Right lobe of liver (tissue), 6 donors: ENCODE measurements at regions of chr1 and their contacts with region 1.

Region 1: GRCh38 chr1:155323798-155324610 is 3.3 kb downstream of the RUSC1 start:
- DNase-seq: peak; percentile 98 to 99 (median 98)
- ATAC-seq: peak; percentile 84 to 93 (median 88)
- H3K4me3 ChIP-seq: peak overlapping the region; percentile 73 to 93 (median 87)
- H3K27ac ChIP-seq: peak overlapping the region; percentile 79 to 94 (median 84)
- H3K4me1 ChIP-seq: peaks cover 0 to 14% (median 1%) of the 10 kb centered on the region in 4 donors
- H3K27me3 ChIP-seq: no peaks in the 10 kb centered on the region
- CTCF ChIP-seq: no peak
- POLR2A ChIP-seq: peak; percentile 66

Region 2: DNA sequence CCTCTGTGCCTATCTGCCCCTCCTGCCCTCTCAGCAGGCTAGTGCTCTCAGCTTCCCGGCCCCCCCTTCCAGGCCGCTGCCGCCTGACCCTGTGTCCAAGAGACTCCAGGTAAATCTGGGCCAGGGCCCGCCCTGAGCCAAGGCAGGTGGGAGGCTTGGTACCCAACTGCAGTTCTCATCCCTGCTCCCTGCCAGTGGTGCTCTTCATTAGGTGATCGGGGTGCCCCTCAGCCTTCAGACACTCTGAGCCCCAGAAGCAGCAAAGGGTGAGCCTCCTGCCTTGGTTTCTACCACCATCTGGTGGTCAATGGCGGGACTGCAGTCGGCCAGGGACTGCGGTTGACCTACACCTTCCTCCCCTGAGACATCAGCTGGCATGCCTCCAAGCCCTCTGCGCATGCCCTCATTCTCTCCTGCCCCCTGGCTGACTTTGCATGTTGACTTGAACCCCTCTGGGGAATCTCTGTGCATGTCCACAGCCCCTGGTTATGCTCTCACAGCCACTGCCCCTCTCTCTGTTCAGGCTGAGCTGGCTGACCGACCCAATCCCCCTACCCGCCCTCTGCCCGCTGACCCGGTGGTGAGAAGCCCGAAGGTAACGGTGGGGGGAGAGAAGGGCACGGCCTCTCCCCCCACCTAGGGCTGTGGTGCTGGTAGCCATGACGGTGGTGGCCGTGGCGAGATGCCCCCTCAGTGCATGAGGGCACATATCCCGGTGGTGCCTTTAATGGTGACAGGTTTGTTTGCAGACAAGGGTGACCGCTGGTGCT is 262.4 kb before region 1 on chr1:
- intact Hi-C with region 1: no loop called
- DNase-seq: peak; percentile 88 to 91 (median 89)
- ATAC-seq: peak; percentile 67 to 77 (median 72)
- H3K4me3 ChIP-seq: no peak overlapping the region
- H3K27ac ChIP-seq: no peak overlapping the region
- H3K4me1 ChIP-seq: peaks cover 0 to 27% (median 14%) of the 10 kb centered on the region in 4 donors
- H3K27me3 ChIP-seq: no peaks in the 10 kb centered on the region
- CTCF ChIP-seq: peak; percentile 98 to 99 (median 99)
- POLR2A ChIP-seq: no peak

Region 3: DNA sequence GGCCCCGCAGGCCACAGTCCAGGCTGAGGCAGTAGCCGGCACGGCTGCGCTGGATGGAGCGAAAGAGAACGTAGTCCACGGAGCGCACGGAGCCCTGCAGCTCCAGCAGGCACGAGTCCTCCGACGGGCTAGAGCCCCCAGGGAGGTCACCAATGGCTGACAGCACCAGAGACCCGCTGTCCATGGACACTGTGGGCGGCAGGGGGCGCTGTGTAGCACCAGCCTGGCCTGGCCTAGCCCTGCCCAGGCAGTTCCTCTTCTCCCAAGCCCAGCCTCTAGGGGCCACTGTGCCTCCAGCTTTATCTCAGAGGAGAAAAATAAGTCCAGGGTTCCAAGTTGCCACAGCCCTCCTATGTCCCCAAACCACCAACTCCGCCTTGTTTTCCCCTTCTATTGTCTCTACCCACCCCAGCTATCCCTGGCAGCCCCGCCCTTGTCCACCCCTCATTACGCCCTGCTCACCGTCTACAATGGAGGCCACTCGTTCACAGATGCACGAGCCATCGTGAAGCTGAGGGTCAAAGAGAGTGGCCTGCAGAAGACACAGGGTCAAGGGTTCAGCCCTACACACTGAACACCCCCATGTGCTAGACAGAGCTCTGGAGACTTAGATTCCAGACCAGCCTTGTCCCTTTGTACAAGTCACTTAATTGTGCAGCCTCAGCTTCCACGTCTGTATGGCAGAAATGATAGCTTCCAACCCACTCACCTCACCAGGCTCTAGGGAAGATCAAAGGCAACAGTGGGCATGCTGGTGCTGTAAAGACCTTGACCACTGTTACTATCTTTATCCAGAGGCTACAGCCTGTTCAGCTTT is 73.2 kb before region 1 on chr1:
- intact Hi-C with region 1: loop called in 1 of 2 experiments (anchors 5 kb)
- DNase-seq: peak; percentile 93 to 94 (median 94)
- ATAC-seq: peak; percentile 83 to 92 (median 87)
- H3K4me3 ChIP-seq: peak overlapping the region in 1 of 3 donors; percentile 23
- H3K27ac ChIP-seq: peak overlapping the region in 1 of 3 donors; percentile 47
- H3K4me1 ChIP-seq: peaks cover 0 to 16% (median 0%) of the 10 kb centered on the region in 4 donors
- H3K27me3 ChIP-seq: no peaks in the 10 kb centered on the region
- CTCF ChIP-seq: peak; percentile 99 to 100 (median 100)
- POLR2A ChIP-seq: no peak

Region 4: GRCh38 chr1:155277070-155277895 is 46.7 kb before region 1 on chr1 and contains the start of gene HCN3:
- intact Hi-C with region 1: loop called (anchors 5 kb)
- DNase-seq: peak; percentile 99
- ATAC-seq: peak; percentile 85 to 90 (median 89)
- H3K4me3 ChIP-seq: peak within 1 kb of the TSS; percentile 64 to 73 (median 68)
- H3K27ac ChIP-seq: no peak within 1 kb of the TSS
- H3K4me1 ChIP-seq: peaks cover 0 to 4% (median 2%) of the 10 kb centered on the region in 4 donors
- H3K27me3 ChIP-seq: no peaks in the 10 kb centered on the region
- CTCF ChIP-seq: peak; percentile 67 to 90 (median 87)
- POLR2A ChIP-seq: no peak
- total RNA-seq, gene HCN3: 0.56 to 1.6 (median 1.2) TPM

Region 5: GRCh38 chr1:155379631-155380090 is 55.7 kb after region 1 on chr1:
- intact Hi-C with region 1: no loop called
- DNase-seq: no peak
- ATAC-seq: peak in 1 of 4 donors; percentile 23
- H3K4me3 ChIP-seq: no peak overlapping the region
- H3K27ac ChIP-seq: no peak overlapping the region
- H3K4me1 ChIP-seq: no peaks in the 10 kb centered on the region
- H3K27me3 ChIP-seq: no peaks in the 10 kb centered on the region
- CTCF ChIP-seq: no peak
- POLR2A ChIP-seq: no peak

Region 6: GRCh38 chr1:155424091-155424490 is 100.1 kb after region 1 on chr1:
- intact Hi-C with region 1: no loop called
- DNase-seq: no peak
- ATAC-seq: no peak
- H3K4me3 ChIP-seq: no peak overlapping the region
- H3K27ac ChIP-seq: no peak overlapping the region
- H3K4me1 ChIP-seq: no peaks in the 10 kb centered on the region
- H3K27me3 ChIP-seq: no peaks in the 10 kb centered on the region
- CTCF ChIP-seq: no peak
- POLR2A ChIP-seq: no peak